Stomach (tissue), 19 donors: ENCODE measurements at regions of chr3 and their contacts with region 1.

Region 1: DNA sequence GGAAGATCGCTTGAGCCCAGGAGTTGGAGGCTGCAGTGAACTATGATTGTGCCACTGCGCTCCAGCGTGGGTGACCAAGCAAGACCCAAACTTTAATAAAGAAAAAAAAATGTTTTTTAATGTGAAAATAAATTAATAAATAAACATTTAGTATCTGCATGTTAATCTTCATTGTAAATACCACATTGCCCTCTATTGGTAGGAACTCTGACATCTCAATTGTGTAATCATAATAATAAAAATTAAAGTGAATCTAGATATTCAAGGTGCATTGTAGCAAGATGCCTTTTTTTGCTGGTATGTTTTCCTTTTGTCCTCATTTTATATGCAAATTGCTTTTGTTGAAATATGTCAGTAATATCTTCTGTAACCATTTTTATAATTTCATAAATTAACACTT is 95.0 kb upstream of the LIMD1 start:
- DNase-seq: peak in 1 of 2 donors; percentile 58
- H3K4me3 ChIP-seq: no peak overlapping the region
- H3K27ac ChIP-seq: no peak overlapping the region
- H3K4me1 ChIP-seq: no peaks in the 10 kb centered on the region
- H3K27me3 ChIP-seq: no peaks in the 10 kb centered on the region
- CTCF ChIP-seq: peak in 4 of 7 experiments; percentile 22 to 39 (median 36)
- EP300 ChIP-seq: no peak
- POLR2A ChIP-seq: no peak

Region 2: DNA sequence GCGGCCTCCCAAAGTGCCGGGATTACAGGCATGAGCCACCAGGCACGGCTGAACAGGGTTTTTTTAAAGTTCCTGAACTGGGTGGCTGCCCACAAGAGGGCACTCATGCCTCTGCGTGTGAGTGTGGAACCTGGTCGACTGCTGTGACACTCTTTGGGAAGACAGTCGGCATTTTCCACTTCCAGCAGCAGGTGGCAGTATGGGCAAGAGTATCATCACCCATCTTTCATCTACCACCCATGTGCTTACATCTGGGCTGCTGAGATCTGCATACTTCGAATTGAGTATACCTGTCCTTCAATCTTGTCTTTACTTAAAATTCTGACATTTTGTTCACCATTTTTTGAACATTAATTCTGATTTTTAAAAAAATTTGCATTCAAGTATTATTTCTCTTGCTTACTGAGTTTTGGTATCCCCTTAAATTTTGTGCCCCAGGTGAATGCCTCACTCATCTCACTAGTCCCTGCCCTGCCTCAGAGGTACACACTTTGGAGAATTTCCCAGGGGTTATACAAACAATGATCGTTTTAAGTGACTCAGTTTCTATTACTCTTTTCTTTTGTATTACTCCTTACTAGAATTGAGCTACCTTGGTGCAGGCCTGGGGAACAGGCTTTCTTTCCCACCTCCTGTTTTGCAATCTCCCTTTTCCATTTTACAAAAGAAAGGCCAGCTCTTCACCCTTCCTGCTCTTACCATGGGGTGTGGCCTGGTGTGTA is 461.6 kb before region 1 on chr3:
- intact Hi-C with region 1: loop called (anchors 10 kb)
- DNase-seq: peak; percentile 94 to 97
- H3K4me3 ChIP-seq: peak overlapping the region in 1 of 4 donors; percentile 6
- H3K27ac ChIP-seq: peak overlapping the region in 1 of 5 donors; percentile 71
- H3K4me1 ChIP-seq: peaks cover 25 to 61% (median 42%) of the 10 kb centered on the region in 4 donors
- H3K27me3 ChIP-seq: peaks cover 0 to 8% (median 0%) of the 10 kb centered on the region in 3 donors
- CTCF ChIP-seq: peak in 6 of 7 experiments; percentile 33 to 99 (median 91)
- EP300 ChIP-seq: no peak
- POLR2A ChIP-seq: no peak

Region 3: GRCh38 chr3:45210308-45211041 is 289.1 kb before region 1 on chr3:
- intact Hi-C with region 1: loop called (anchors 10 kb)
- DNase-seq: peak; percentile 90
- H3K4me3 ChIP-seq: no peak overlapping the region
- H3K27ac ChIP-seq: peak overlapping the region in 3 of 5 donors; percentile 20 to 29 (median 20)
- H3K4me1 ChIP-seq: peaks cover 0 to 25% (median 18%) of the 10 kb centered on the region in 4 donors
- H3K27me3 ChIP-seq: no peaks in the 10 kb centered on the region
- CTCF ChIP-seq: peak in 6 of 7 experiments; percentile 19 to 98 (median 77)
- EP300 ChIP-seq: no peak
- POLR2A ChIP-seq: no peak